A673 (cell line): ENCODE measurements at regions of chrX and their contacts with region 1.

Region 1: GRCh38 chrX:19887911-19888879 is 795 bp upstream of the SH3KBP1 start:
- DNase-seq: peak; percentile 73
- H3K4me3 ChIP-seq: peak overlapping the region; percentile 60
- H3K27ac ChIP-seq: peak overlapping the region; percentile 67
- H3K4me1 ChIP-seq: no peaks in the 10 kb centered on the region
- H3K27me3 ChIP-seq: peaks cover 3% of the 10 kb centered on the region
- CTCF ChIP-seq: peak; percentile 59

Region 2: DNA sequence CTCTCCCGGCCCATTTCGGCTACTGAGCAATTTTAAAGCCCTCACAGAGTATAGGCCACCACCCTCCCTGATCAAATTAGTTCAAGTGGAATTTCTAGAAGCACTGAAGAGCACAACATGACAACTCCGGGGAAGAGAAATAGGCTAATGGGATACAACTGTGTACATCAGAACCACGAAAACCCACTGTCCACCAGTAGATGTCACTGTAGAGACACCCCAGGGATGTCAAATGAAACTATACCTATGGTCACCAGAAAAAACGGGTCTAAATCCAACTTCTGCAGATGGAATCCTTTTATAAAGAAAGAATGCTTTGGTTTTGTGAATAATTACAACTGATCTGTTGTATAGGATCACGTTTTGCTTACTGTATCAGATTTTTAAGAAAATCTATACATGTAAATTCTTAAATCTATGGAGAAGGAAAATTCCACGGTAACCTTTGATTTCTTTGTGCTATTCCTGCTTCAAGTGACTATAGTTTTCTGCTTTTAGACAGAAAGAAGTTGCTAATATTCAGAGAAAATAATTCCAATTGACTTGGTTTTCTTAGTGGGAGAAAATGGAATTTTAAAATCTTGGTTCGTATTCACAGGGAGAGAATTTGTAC is 343.4 kb before region 1 on chrX:
- CTCF ChIA-PET with region 1: no interaction called
- POLR2A ChIA-PET with region 1: interaction called, 4 read pairs
- intact Hi-C with region 1: loop called (anchors 1 kb)
- DNase-seq: peak; percentile 69
- H3K4me3 ChIP-seq: no peak overlapping the region
- H3K27ac ChIP-seq: no peak overlapping the region
- H3K4me1 ChIP-seq: no peaks in the 10 kb centered on the region
- H3K27me3 ChIP-seq: peaks cover 7% of the 10 kb centered on the region
- CTCF ChIP-seq: peak; percentile 86

Region 3: DNA sequence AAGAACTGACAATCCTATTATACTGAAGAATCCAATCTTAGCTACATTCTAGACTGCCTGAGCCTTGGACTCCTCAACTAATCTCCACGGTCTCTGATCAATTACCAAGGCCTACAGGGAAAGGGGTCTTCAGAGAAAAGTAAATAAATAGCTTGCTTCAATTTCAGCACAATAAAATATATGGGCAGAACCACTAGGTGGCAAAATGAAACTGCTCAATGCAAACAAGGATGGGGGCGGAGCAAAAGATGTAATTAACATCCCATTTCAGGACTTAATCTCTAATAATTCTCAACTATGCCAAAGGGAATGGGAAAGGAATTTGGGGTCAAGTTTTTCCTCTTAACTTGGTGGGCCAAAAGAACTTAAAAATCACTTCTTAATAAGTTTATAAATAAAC is 294.5 kb before region 1 on chrX:
- CTCF ChIA-PET with region 1: interaction called, 5 read pairs
- POLR2A ChIA-PET with region 1: no interaction called
- intact Hi-C with region 1: loop called (anchors 1 kb)
- DNase-seq: peak; percentile 72
- H3K4me3 ChIP-seq: no peak overlapping the region
- H3K27ac ChIP-seq: no peak overlapping the region
- H3K4me1 ChIP-seq: peaks cover 6% of the 10 kb centered on the region
- H3K27me3 ChIP-seq: no peaks in the 10 kb centered on the region
- CTCF ChIP-seq: peak; percentile 64

Region 4: DNA sequence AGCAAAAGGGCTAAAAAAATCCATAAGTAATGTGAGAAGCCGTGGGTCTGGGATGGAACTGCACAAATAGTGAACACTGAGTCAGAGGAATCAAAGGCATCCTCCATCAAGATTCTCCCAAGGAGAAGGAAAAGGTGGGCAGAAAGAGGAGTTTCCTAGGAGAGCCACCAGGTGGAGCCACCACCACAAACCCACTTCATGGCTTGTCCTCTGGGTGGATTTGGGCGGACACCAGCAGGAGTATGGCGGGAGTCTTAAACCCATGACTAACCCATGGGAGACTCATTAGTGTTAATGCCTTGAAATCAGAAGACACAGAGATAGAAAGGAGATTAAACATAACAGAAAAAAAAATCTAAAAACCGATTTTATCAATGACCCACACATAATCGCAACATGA is 148.5 kb before region 1 on chrX:
- CTCF ChIA-PET with region 1: no interaction called
- POLR2A ChIA-PET with region 1: no interaction called
- intact Hi-C with region 1: loop called (anchors 1 kb)
- DNase-seq: peak; percentile 77
- H3K4me3 ChIP-seq: no peak overlapping the region
- H3K27ac ChIP-seq: no peak overlapping the region
- H3K4me1 ChIP-seq: peaks cover 1% of the 10 kb centered on the region
- H3K27me3 ChIP-seq: no peaks in the 10 kb centered on the region
- CTCF ChIP-seq: peak; percentile 82

Region 5: GRCh38 chrX:19907794-19908193 is 19.6 kb after region 1 on chrX:
- CTCF ChIA-PET with region 1: no interaction called
- POLR2A ChIA-PET with region 1: no interaction called
- intact Hi-C with region 1: no loop called
- DNase-seq: no peak
- H3K4me3 ChIP-seq: no peak overlapping the region
- H3K27ac ChIP-seq: no peak overlapping the region
- H3K4me1 ChIP-seq: no peaks in the 10 kb centered on the region
- H3K27me3 ChIP-seq: no peaks in the 10 kb centered on the region
- CTCF ChIP-seq: no peak